Psoas muscle (tissue), 8 donors: ENCODE measurements at regions of chr16 and their contacts with region 1.

Region 1: GRCh38 chr16:10579965-10580882 is at the start of gene EMP2:
- DNase-seq: peak; percentile 82 to 86
- ATAC-seq: peak; percentile 62 to 83 (median 70)
- H3K4me3 ChIP-seq: peak within 1 kb of the TSS; percentile 86
- H3K27ac ChIP-seq: peak within 1 kb of the TSS; percentile 86
- H3K4me1 ChIP-seq: peaks cover 43% of the 10 kb centered on the region
- H3K27me3 ChIP-seq: no peaks in the 10 kb centered on the region
- CTCF ChIP-seq: peak; percentile 46
- total RNA-seq, gene EMP2: 11.0 to 25.4 (median 17.7) TPM

Region 2: GRCh38 chr16:10521681-10522274 is 58.4 kb before region 1 on chr16:
- intact Hi-C with region 1: loop called (anchors 5 to 10 kb)
- DNase-seq: peak; percentile 22 to 63
- ATAC-seq: peak; percentile 65 to 91 (median 82)
- H3K4me3 ChIP-seq: no peak overlapping the region
- H3K27ac ChIP-seq: no peak overlapping the region
- H3K4me1 ChIP-seq: no peaks in the 10 kb centered on the region
- H3K27me3 ChIP-seq: no peaks in the 10 kb centered on the region
- CTCF ChIP-seq: peak; percentile 92

Region 3: DNA sequence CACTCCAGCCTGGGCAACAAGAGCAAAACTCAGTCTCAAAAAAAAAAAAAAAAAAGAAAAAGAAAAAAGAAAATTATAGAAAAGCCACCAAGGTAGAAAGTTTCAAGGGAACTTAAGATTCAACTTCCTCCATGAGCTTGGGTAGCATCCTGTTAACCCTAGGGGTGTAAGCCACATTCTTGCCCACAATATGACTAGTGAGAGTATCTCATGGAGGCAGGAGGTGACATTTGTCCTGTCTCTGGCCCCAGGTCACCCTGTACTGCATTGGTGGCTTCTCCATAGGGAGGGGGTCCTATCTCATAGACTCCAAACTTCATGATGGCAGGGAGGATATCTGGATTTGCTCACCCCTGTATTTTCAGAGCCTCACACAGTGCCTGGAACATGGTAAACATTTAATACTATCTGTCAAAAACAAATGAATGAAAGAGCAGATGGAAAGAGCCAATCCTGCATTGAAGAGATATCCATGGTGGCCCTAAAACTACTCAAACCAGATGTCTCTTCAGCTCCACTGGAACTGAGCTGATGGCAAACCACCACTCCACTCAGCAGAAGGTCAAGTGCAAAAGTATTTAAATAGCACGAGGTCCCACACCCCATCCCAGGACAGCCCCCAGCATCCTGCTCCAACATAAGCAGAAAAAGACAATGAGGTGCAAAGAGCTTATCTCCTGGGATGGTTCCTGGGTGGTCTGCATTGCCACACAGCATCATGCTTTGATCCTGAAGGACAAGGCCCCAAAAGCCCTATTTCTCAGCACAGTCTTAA is 50.1 kb before region 1 on chr16:
- intact Hi-C with region 1: loop called (anchors 5 to 10 kb)
- DNase-seq: no peak
- ATAC-seq: no peak
- H3K4me3 ChIP-seq: no peak overlapping the region
- H3K27ac ChIP-seq: peak overlapping the region; percentile 41
- H3K4me1 ChIP-seq: peaks cover 19% of the 10 kb centered on the region
- H3K27me3 ChIP-seq: no peaks in the 10 kb centered on the region
- CTCF ChIP-seq: no peak

Region 4: DNA sequence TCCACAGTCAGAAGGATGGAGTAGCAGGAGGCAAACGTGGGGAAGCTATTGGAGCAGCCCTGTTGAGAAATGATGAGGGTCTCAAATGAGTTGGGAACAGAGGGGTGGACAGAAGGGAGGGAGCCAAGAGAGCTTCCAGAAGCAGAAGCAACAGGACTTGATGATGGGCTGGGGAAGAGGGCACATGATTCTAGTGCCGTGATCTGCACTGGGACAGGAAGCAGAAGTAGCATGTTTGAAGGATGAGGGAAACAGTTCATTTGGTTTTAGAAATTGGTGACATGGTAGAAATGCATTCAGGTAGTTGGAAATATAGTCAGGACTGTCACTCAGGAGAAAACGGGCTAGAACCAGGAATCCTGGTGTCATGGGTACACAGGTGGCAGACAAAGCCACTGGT is 19.2 kb before region 1 on chr16:
- intact Hi-C with region 1: loop called in 1 of 2 experiments (anchors 2 kb)
- DNase-seq: no peak
- ATAC-seq: no peak
- H3K4me3 ChIP-seq: no peak overlapping the region
- H3K27ac ChIP-seq: peak overlapping the region; percentile 96
- H3K4me1 ChIP-seq: peaks cover 65% of the 10 kb centered on the region
- H3K27me3 ChIP-seq: no peaks in the 10 kb centered on the region
- CTCF ChIP-seq: no peak

Region 5: GRCh38 chr16:10737068-10737625 is 156.9 kb after region 1 on chr16:
- intact Hi-C with region 1: loop called (anchors 5 kb)
- DNase-seq: no peak
- ATAC-seq: peak; percentile 53 to 78 (median 60)
- H3K4me3 ChIP-seq: peak overlapping the region; percentile 19
- H3K27ac ChIP-seq: peak overlapping the region; percentile 94
- H3K4me1 ChIP-seq: peaks cover 20% of the 10 kb centered on the region
- H3K27me3 ChIP-seq: no peaks in the 10 kb centered on the region
- CTCF ChIP-seq: peak; percentile 99

Region 6: GRCh38 chr16:10743610-10744393 is 163.6 kb after region 1 on chr16 and contains the start of gene NUBP1:
- intact Hi-C with region 1: loop called (anchors 5 kb)
- DNase-seq: peak; percentile 99
- ATAC-seq: peak; percentile 97 to 98 (median 98)
- H3K4me3 ChIP-seq: peak within 1 kb of the TSS; percentile 58
- H3K27ac ChIP-seq: peak within 1 kb of the TSS; percentile 86
- H3K4me1 ChIP-seq: peaks cover 23% of the 10 kb centered on the region
- H3K27me3 ChIP-seq: no peaks in the 10 kb centered on the region
- CTCF ChIP-seq: no peak
- total RNA-seq, gene NUBP1: 24.7 to 38.1 (median 29.0) TPM